ENCODE measurements at regions of chr11 and their contacts with region 1.

Region 1: GRCh38 chr11:842370-843002 is at the starts of genes POLR2L and TSPAN4:
- DNase-seq: peak; percentile 76 to 94 (median 86)
- ATAC-seq: peak; percentile 83
- H3K4me3 ChIP-seq: peak within 1 kb of the TSS; percentile 91
- H3K4me3 Mint-ChIP-seq: peak within 1 kb of the TSS; percentile 87
- H3K27ac ChIP-seq: peak within 1 kb of the TSS in 1 of 2 donors; percentile 50
- H3K27ac Mint-ChIP-seq: peak within 1 kb of the TSS; percentile 55
- H3K4me1 ChIP-seq: peaks cover 43% of the 10 kb centered on the region
- H3K4me1 Mint-ChIP-seq: peaks cover 6% of the 10 kb centered on the region
- H3K27me3 ChIP-seq: peaks cover 0 to 2% of the 10 kb centered on the region in 2 experiments
- H3K27me3 Mint-ChIP-seq: no peaks in the 10 kb centered on the region
- CTCF ChIP-seq: no peak
- total RNA-seq, gene POLR2L: 19.6 to 19.8 TPM
- total RNA-seq, gene TSPAN4: 1.6 to 2.0 TPM

Region 2: DNA sequence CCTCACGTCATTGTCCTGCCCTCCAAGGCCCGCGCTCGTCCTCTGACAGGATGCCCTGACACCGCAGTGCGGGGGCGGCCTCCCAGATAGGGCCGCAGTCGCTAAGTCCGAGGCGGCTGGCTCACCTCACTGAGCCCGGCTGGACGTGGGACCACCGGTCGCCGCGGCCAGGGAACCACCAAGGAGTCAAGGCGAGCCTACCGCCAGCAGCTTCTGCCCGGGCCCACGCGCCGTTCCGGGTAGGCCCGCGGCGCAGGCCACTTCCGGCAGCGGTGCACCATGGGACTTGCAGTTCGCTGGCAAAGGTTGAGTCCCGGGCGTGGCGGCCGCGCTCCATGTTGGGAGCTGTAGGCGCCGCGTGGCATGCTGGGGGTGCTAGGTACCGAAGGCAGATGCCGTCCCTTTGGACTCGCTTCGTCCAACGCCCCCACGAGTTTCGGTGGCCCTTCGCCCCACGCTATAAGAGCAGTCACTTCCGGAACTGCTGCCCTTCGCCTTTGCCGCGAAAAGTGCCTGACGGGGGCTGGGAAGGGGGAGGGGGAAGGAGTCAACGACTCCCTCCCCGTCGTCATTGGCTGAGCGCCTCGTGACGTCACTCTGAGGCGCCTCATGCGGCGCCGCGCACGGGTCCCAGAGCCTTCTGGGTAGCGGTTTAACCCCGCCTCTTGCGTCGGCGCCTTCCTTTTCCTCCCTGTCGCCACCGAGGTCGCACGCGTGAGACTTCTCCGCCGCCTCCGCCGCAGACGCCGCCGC is 33.0 kb before region 1 on chr11 and contains the start of gene RPLP2:
- CTCF ChIA-PET with region 1: no interaction called
- POLR2A ChIA-PET with region 1: interaction called, 10 read pairs
- intact Hi-C with region 1: loop called in 1 of 2 experiments (anchors 2 kb)
- DNase-seq: peak; percentile 93 to 99 (median 97)
- ATAC-seq: peak; percentile 82
- H3K4me3 ChIP-seq: peak within 1 kb of the TSS; percentile 92
- H3K4me3 Mint-ChIP-seq: peak within 1 kb of the TSS; percentile 95
- H3K27ac ChIP-seq: peak within 1 kb of the TSS; percentile 95 to 99
- H3K27ac Mint-ChIP-seq: peak within 1 kb of the TSS; percentile 99
- H3K4me1 ChIP-seq: peaks cover 42% of the 10 kb centered on the region
- H3K4me1 Mint-ChIP-seq: peaks cover 35% of the 10 kb centered on the region
- H3K27me3 ChIP-seq: no peaks in the 10 kb centered on the region
- H3K27me3 Mint-ChIP-seq: no peaks in the 10 kb centered on the region
- CTCF ChIP-seq: no peak
- total RNA-seq, gene RPLP2: 5,234 to 5,390 TPM

Region 3: DNA sequence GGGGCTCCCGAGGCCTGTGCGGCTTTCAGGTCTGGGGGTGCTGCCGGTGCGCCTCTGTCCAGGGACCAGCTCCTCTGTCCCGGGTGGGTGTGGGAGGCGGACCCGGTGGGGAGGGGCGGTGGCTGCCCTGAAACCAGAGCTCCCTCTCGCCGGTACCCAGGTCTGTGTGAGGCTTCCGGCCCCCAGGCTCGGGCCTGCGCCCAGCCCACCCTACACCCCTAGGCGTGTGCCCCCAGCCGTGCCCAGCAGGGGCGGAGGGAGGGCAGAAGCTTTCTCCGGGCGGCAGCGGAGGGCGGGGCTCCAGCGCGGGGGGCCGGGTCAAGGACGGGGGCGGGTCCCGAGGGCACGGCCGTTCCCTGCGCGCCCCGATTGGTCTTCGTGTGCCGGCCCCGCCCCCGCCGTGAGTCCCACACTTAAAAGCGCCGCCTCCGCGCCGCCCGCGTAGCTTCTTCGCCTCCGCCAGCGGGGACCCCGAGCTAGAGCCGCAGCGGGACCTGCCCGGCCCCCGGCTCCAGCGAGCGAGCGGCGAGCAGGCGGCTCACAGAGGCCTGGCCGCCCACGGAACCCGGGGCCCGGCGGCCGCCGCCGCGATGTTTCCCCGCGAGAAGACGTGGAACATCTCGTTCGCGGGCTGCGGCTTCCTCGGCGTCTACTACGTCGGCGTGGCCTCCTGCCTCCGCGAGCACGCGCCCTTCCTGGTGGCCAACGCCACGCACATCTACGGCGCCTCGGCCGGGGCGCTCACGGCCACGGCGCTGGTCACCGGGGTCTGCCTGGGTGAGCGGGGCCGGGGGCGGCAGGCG is 23.2 kb before region 1 on chr11:
- CTCF ChIA-PET with region 1: interaction called, 7 read pairs
- POLR2A ChIA-PET with region 1: interaction called, 49 read pairs
- intact Hi-C with region 1: loop called in 1 of 2 experiments (anchors 1 kb)
- DNase-seq: peak; percentile 83 to 96 (median 92)
- ATAC-seq: peak; percentile 71
- H3K4me3 ChIP-seq: peak overlapping the region; percentile 74
- H3K4me3 Mint-ChIP-seq: peak overlapping the region; percentile 97
- H3K27ac ChIP-seq: peak overlapping the region; percentile 62 to 88
- H3K27ac Mint-ChIP-seq: peak overlapping the region; percentile 92
- H3K4me1 ChIP-seq: peaks cover 34% of the 10 kb centered on the region
- H3K4me1 Mint-ChIP-seq: peaks cover 11% of the 10 kb centered on the region
- H3K27me3 ChIP-seq: no peaks in the 10 kb centered on the region
- H3K27me3 Mint-ChIP-seq: no peaks in the 10 kb centered on the region
- CTCF ChIP-seq: peak; percentile 21

Region 4: GRCh38 chr11:925496-926321 is 83.2 kb after region 1 on chr11 and contains the start of gene AP2A2:
- CTCF ChIA-PET with region 1: no interaction called
- POLR2A ChIA-PET with region 1: no interaction called
- intact Hi-C with region 1: loop called in 1 of 2 experiments (anchors 10 kb)
- DNase-seq: peak; percentile 78 to 99 (median 90)
- ATAC-seq: peak; percentile 71
- H3K4me3 ChIP-seq: peak within 1 kb of the TSS; percentile 65
- H3K4me3 Mint-ChIP-seq: peak within 1 kb of the TSS; percentile 90
- H3K27ac ChIP-seq: peak within 1 kb of the TSS; percentile 62 to 73
- H3K27ac Mint-ChIP-seq: peak within 1 kb of the TSS; percentile 96
- H3K4me1 ChIP-seq: peaks cover 43% of the 10 kb centered on the region
- H3K4me1 Mint-ChIP-seq: peaks cover 33% of the 10 kb centered on the region
- H3K27me3 ChIP-seq: no peaks in the 10 kb centered on the region
- H3K27me3 Mint-ChIP-seq: no peaks in the 10 kb centered on the region
- CTCF ChIP-seq: peak; percentile 61
- total RNA-seq, gene AP2A2: 45.9 to 46.6 TPM

Region 5: GRCh38 chr11:1515082-1516060 is 672.9 kb after region 1 on chr11:
- CTCF ChIA-PET with region 1: no interaction called
- POLR2A ChIA-PET with region 1: no interaction called
- intact Hi-C with region 1: loop called in 1 of 2 experiments (anchors 10 kb)
- DNase-seq: peak; percentile 55 to 83 (median 68)
- ATAC-seq: peak; percentile 80
- H3K4me3 ChIP-seq: no peak overlapping the region
- H3K4me3 Mint-ChIP-seq: peak overlapping the region; percentile 42
- H3K27ac ChIP-seq: no peak overlapping the region
- H3K27ac Mint-ChIP-seq: peak overlapping the region; percentile 29
- H3K4me1 ChIP-seq: peaks cover 70% of the 10 kb centered on the region
- H3K4me1 Mint-ChIP-seq: peaks cover 66% of the 10 kb centered on the region
- H3K27me3 ChIP-seq: no peaks in the 10 kb centered on the region
- H3K27me3 Mint-ChIP-seq: no peaks in the 10 kb centered on the region
- CTCF ChIP-seq: peak; percentile 84

Region 6: DNA sequence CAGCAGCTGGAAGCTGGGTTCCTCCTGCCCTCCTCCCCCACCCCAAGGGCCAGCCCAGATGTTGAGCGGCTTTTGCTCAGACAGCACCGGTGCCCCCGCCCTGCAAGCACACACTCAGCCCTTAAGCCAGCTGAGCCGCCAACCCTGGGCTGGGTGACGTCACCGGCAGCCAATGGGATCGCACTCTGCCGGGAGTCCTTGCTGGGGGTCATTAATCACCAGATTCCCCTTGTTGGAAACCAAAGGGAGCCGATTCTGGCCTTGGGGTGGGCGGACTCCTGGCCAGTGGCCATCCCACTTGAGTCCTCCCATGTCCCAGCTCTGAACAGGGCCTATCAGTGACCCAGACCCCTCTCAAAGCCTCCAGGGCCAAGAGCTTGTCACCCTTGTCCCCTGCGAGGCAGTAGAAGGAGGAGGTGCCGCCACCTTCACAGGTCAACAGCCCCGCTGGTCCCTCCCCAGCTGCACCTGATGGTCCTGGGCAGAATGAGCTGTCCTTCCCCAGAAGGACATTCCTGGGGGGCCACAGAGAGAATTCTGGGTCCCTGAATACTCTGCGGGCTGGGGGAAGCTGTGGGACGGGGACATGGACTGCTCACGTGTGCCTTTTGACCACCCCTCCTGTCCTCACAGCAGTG is 722.2 kb after region 1 on chr11:
- CTCF ChIA-PET with region 1: no interaction called
- POLR2A ChIA-PET with region 1: no interaction called
- intact Hi-C with region 1: no loop called
- DNase-seq: peak in 3 of 14 experiments; percentile 41 to 60 (median 46)
- ATAC-seq: peak; percentile 31
- H3K4me3 ChIP-seq: no peak overlapping the region
- H3K4me3 Mint-ChIP-seq: no peak overlapping the region
- H3K27ac ChIP-seq: no peak overlapping the region
- H3K27ac Mint-ChIP-seq: no peak overlapping the region
- H3K4me1 ChIP-seq: peaks cover 10% of the 10 kb centered on the region
- H3K4me1 Mint-ChIP-seq: peaks cover 5% of the 10 kb centered on the region
- H3K27me3 ChIP-seq: no peaks in the 10 kb centered on the region
- H3K27me3 Mint-ChIP-seq: no peaks in the 10 kb centered on the region
- CTCF ChIP-seq: no peak